CD4-positive, alpha-beta memory T cell (primary cell): ENCODE measurements at regions of chr6 and their contacts with region 1.

Region 1: DNA sequence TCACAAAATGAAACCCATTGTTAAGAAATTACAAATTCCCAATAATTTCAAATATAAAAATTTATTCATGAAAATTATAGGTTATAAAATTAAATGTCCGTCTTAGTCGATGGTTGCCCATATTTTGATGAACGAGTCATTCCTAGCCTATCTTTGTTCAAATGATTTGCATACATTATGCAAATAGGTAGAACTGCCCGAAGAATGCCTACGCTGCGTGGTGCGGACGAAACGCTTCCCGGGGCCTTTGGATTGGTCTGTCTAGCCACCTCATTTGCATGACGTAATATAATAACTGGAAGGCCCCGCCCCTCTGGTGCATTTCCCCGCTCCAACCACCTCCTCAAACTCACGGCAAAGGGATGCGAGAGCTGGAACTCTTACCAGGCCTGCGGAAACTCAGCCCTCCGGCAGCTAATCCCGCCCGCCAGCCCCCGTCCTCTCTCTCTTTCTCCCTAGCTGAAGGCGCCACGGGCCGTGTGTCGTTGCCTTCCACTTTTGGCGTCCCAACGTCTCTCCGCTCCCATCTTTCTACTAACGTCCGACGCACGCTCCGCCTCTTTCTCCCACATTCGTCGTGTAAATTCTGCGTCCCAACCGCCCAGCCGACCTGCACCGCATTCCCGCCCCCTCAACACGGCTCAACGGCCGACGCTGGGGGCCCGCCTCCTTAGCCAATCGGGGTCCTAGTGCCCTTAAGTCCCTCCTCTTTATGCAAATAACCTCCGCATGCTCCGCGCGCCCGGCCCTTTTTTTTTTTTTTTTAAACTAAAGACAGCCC is 520 bp upstream of the PRRC2A start:
- DNase-seq: peak; percentile 96 to 98 (median 98)
- H3K4me3 ChIP-seq: peak overlapping the region in 1 of 2 donors; percentile 93
- H3K4me3 Mint-ChIP-seq: peak overlapping the region; percentile 89 to 98 (median 93)
- H3K27ac ChIP-seq: peak overlapping the region; percentile 99
- H3K27ac Mint-ChIP-seq: peak overlapping the region; percentile 91 to 99 (median 98)
- H3K4me1 ChIP-seq: peaks cover 34% of the 10 kb centered on the region
- H3K4me1 Mint-ChIP-seq: peaks cover 21 to 49% (median 39%) of the 10 kb centered on the region in 4 donors
- H3K27me3 ChIP-seq: no peaks in the 10 kb centered on the region
- H3K27me3 Mint-ChIP-seq: no peaks in the 10 kb centered on the region

Region 2: DNA sequence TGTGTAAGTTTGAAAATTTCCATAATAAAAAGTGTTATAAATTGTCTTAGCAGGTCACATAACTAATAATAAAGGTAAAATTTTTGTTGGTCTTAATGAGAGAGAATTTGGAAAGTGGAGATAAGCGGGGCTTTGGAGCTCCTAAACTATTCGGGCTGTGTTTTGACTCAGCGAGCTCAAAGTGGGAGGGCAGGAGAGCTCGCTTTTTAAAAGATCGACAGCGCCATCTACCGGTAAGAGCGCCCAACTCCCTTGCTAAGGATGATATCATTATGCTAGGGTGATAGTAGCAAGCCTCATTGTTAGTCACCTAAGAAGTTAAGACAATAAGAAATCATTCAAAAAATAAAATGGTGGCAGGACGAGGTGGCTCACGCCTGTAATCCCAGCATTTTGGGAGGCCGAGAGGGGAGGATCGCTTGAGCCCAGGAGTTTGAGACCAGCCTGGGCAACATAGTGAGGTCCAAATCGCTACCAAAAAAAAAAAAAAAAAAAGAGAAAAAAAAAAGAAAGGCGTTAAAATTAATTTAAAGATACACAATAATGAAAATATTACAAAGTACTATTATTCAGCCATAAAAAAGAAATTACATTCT is 532.4 kb before region 1 on chr6:
- CTCF ChIA-PET with region 1: no interaction called
- POLR2A ChIA-PET with region 1: no interaction called
- intact Hi-C with region 1: no loop called
- DNase-seq: peak; percentile 75 to 86 (median 82)
- H3K4me3 ChIP-seq: no peak overlapping the region
- H3K4me3 Mint-ChIP-seq: peak overlapping the region in 1 of 8 donors; percentile 44
- H3K27ac ChIP-seq: no peak overlapping the region
- H3K27ac Mint-ChIP-seq: peak overlapping the region in 4 of 7 donors; percentile 32 to 58 (median 44)
- H3K4me1 ChIP-seq: peaks cover 16% of the 10 kb centered on the region
- H3K4me1 Mint-ChIP-seq: peaks cover 11 to 24% (median 18%) of the 10 kb centered on the region in 4 donors
- H3K27me3 ChIP-seq: no peaks in the 10 kb centered on the region
- H3K27me3 Mint-ChIP-seq: peaks cover 0 to 4% of the 10 kb centered on the region in 2 donors

Region 3: DNA sequence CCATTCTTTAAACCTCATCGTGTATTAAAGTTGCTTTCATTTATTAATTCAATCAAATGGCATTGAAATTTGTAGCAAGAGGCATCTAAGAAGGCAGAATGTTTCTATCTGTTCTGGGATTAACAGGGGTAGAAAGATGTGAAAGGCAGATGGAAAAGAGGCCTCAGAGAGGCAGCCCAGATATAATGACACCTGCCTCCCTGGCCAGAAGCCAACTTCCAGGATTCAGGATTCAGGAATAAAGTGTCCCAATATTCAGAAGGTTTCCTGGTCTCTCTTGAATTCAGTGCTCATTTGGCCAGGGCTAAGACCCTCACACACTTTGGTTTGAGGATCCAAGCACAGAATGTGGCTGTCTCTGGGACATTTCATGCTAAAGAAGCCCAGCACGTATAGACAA is 303.0 kb before region 1 on chr6:
- CTCF ChIA-PET with region 1: no interaction called
- POLR2A ChIA-PET with region 1: no interaction called
- intact Hi-C with region 1: no loop called
- DNase-seq: no peak
- H3K4me3 ChIP-seq: no peak overlapping the region
- H3K4me3 Mint-ChIP-seq: no peak overlapping the region
- H3K27ac ChIP-seq: no peak overlapping the region
- H3K27ac Mint-ChIP-seq: no peak overlapping the region
- H3K4me1 ChIP-seq: no peaks in the 10 kb centered on the region
- H3K4me1 Mint-ChIP-seq: no peaks in the 10 kb centered on the region
- H3K27me3 ChIP-seq: no peaks in the 10 kb centered on the region
- H3K27me3 Mint-ChIP-seq: peaks cover 13 to 22% of the 10 kb centered on the region in 2 donors

Region 4: DNA sequence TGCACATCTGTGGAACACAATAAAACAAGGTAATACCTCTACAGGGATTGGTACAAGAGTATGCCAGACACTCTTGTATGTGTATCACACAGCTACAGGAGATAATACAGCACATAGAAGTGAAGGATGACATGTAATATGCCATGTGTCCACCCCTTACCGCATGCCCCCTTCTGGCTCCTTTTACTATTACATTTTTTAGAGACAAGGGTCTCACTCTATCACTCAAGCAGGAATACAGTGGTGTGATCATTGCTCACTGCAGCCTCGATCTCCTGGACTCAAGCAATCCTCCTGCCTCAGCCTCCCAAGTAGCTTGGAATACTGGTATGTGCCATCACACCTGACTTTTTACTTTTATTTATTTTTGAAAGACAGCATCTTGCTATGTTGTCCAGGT is 23.0 kb before region 1 on chr6:
- CTCF ChIA-PET with region 1: interaction called, 18 read pairs
- POLR2A ChIA-PET with region 1: interaction called, 6 read pairs
- intact Hi-C with region 1: no loop called
- DNase-seq: peak; percentile 66 to 79 (median 75)
- H3K4me3 ChIP-seq: no peak overlapping the region
- H3K4me3 Mint-ChIP-seq: peak overlapping the region in 5 of 8 donors; percentile 33 to 66 (median 43)
- H3K27ac ChIP-seq: no peak overlapping the region
- H3K27ac Mint-ChIP-seq: peak overlapping the region; percentile 60 to 89 (median 77)
- H3K4me1 ChIP-seq: peaks cover 60% of the 10 kb centered on the region
- H3K4me1 Mint-ChIP-seq: peaks cover 27 to 56% (median 45%) of the 10 kb centered on the region in 4 donors
- H3K27me3 ChIP-seq: no peaks in the 10 kb centered on the region
- H3K27me3 Mint-ChIP-seq: no peaks in the 10 kb centered on the region

Region 5: DNA sequence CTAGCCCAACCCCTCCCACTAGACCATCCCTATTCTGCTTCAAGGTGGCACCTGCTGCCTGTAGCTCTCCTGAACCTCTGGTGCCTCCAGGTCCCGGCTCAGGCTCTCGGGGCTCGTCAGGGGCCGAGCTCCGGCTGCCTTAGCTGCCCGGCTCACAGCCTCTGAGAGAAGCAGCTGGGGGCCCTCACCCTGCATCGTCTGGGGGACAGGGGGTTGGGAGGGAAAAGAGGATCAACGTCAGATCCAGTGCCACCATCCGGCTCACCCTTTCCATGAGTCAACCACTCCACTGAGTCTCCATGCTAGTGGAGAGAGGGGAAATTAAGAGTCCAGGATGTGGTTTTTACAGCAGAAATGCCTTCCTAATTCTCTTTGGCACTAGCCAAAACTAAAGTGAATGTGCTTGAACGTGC is 19.5 kb after region 1 on chr6:
- CTCF ChIA-PET with region 1: interaction called, 3 read pairs
- POLR2A ChIA-PET with region 1: interaction called, 14 read pairs
- intact Hi-C with region 1: no loop called
- DNase-seq: no peak
- H3K4me3 ChIP-seq: no peak overlapping the region
- H3K4me3 Mint-ChIP-seq: no peak overlapping the region
- H3K27ac ChIP-seq: no peak overlapping the region
- H3K27ac Mint-ChIP-seq: peak overlapping the region in 3 of 7 donors; percentile 6 to 53 (median 36)
- H3K4me1 ChIP-seq: no peaks in the 10 kb centered on the region
- H3K4me1 Mint-ChIP-seq: peaks cover 0 to 5% (median 2%) of the 10 kb centered on the region in 4 donors
- H3K27me3 ChIP-seq: no peaks in the 10 kb centered on the region
- H3K27me3 Mint-ChIP-seq: no peaks in the 10 kb centered on the region

Region 6: DNA sequence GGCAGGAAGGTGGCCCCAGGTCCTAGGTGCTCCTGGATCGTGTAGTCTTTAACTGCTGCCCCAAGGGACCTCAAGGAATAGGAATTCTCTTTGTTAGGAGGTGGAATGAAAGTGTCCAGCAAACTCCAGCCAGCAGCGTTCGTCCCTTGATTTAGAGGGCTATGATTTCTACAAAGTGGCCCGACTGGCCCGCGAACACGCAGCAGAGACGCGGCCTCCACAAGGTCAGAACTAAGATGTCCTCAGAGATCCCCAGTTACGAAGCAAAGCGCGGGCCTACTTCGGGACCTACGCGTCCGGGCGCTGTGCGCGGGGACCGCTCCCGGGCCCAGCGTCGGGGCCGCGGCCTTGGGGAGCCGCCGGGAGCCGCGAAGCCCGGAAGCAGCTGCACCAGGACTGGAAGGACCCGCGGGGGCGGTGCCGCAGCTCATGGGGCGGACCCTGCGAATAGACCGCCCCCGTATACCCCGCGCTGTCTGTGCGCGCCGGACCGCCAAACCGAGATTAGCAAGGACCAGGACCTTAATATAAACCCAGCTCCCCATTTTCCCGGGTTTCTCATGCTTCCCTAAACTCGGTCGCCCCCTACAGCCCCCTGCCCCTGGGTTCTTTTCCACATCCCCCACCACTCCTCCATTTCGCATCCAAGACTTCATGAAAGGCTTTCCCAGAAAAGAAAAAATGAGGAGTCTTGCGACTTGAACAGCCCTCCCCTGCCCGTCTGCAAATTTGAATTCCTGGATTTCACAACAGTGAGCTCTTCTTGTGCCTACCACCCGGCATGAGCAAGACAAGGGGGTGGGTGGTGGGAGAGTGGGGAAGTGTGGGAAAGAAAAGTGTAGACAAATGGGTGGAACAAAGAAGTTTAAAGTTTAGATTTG is 40.6 kb after region 1 on chr6 and contains the start of gene C6orf47:
- CTCF ChIA-PET with region 1: interaction called, 4 read pairs
- POLR2A ChIA-PET with region 1: interaction called, 12 read pairs
- intact Hi-C with region 1: loop called (anchors 1 kb)
- DNase-seq: peak; percentile 64 to 76 (median 66)
- H3K4me3 ChIP-seq: peak within 1 kb of the TSS; percentile 71 to 83
- H3K4me3 Mint-ChIP-seq: peak within 1 kb of the TSS; percentile 86 to 93 (median 92)
- H3K27ac ChIP-seq: peak within 1 kb of the TSS; percentile 84
- H3K27ac Mint-ChIP-seq: peak within 1 kb of the TSS; percentile 88 to 95 (median 91)
- H3K4me1 ChIP-seq: peaks cover 61% of the 10 kb centered on the region
- H3K4me1 Mint-ChIP-seq: peaks cover 48 to 87% (median 66%) of the 10 kb centered on the region in 4 donors
- H3K27me3 ChIP-seq: no peaks in the 10 kb centered on the region
- H3K27me3 Mint-ChIP-seq: no peaks in the 10 kb centered on the region
- total RNA-seq, gene C6orf47: 37.5 to 39.9 TPM

Region 7: DNA sequence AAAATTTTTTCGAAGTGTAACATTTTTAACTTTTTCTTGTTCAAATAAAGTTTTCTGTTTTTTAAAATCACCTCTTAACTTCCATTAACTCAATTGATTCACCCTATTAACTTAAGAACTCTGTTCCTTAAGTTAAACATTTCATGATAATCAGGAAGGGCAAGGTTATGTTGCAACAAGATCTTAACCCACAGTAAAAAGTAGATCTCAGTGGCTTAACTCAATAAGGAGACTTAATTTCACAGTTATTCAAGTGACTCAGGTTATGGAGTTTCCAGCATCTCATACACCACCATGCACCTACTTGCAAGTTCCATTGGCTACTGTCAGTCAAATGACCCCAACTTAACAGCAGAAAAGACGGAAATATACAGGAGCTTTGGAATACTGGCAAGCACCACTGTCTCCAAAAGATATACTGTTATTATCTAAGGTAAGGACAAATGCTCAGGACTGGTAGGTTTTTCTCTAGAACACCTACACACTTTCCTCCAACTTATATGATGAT is 1035.3 kb after region 1 on chr6:
- CTCF ChIA-PET with region 1: no interaction called
- POLR2A ChIA-PET with region 1: no interaction called
- intact Hi-C with region 1: no loop called
- DNase-seq: no peak
- H3K4me3 ChIP-seq: no peak overlapping the region
- H3K4me3 Mint-ChIP-seq: no peak overlapping the region
- H3K27ac ChIP-seq: no peak overlapping the region
- H3K27ac Mint-ChIP-seq: no peak overlapping the region
- H3K4me1 ChIP-seq: no peaks in the 10 kb centered on the region
- H3K4me1 Mint-ChIP-seq: peaks cover 0 to 14% (median 5%) of the 10 kb centered on the region in 4 donors
- H3K27me3 ChIP-seq: no peaks in the 10 kb centered on the region
- H3K27me3 Mint-ChIP-seq: no peaks in the 10 kb centered on the region